ENCODE measurements at regions of chr2 and their contacts with region 1.

Region 1: GRCh38 chr2:238288650-238289573 is 502 bp upstream of the PER2 start:
- DNase-seq: peak; percentile 98
- H3K4me3 ChIP-seq: peak overlapping the region; percentile 39 to 80 (median 78)
- H3K27ac ChIP-seq: peak overlapping the region; percentile 99
- H3K4me1 ChIP-seq: peaks cover 55% of the 10 kb centered on the region
- H3K27me3 ChIP-seq: no peaks in the 10 kb centered on the region
- CTCF ChIP-seq: peak in 1 of 2 donors; percentile 15

Region 2: DNA sequence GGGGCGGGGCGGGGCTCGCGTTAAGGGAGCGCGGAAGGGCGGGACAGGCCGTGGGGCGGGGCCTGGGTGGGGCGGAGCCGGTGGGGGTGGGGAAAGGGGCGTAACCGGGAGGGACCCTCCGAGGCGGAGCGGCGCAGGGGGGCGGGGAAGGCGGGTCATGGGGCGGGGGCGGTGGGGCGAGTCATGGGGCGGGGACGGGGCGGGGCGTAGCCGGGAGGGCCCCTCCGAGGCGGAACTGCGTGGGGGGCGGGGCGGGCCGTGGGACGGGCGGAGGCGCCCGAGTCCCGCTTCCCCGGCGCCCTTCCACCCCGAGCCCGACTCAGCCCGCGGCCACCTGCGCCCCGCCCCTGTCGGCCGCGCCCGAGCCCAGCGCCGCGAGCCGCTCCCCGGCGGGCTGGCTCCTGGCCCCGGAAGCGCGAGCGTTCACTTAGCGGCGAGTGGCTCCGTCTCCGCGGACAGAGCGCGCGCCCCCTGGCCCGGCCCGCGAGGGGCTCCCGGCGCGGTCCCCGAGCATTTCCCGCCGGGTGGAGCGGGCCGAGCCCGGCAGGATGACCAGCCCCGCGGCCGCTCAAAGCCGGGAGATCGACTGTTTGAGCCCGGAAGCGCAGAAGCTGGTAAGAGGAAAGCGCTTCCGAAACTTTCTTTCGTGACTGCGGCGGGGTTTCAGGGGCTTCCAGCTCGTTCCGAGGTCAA is 596.9 kb before region 1 on chr2:
- CTCF ChIA-PET with region 1: no interaction called
- dilution Hi-C with region 1: no loop called
- in situ Hi-C with region 1: no loop called
- intact Hi-C with region 1: loop called (anchors 5 kb)
- DNase-seq: peak; percentile 84
- H3K4me3 ChIP-seq: peak overlapping the region; percentile 84 to 94 (median 93)
- H3K27ac ChIP-seq: peak overlapping the region; percentile 99
- H3K4me1 ChIP-seq: peaks cover 72% of the 10 kb centered on the region
- H3K27me3 ChIP-seq: no peaks in the 10 kb centered on the region
- CTCF ChIP-seq: no peak

Region 3: GRCh38 chr2:238203094-238203972 is 85.6 kb before region 1 on chr2 and contains the start of gene ILKAP:
- CTCF ChIA-PET with region 1: no interaction called
- dilution Hi-C with region 1: no loop called
- in situ Hi-C with region 1: no loop called
- intact Hi-C with region 1: no loop called
- DNase-seq: peak; percentile 80
- H3K4me3 ChIP-seq: peak within 1 kb of the TSS; percentile 70 to 98 (median 83)
- H3K27ac ChIP-seq: peak within 1 kb of the TSS; percentile 69
- H3K4me1 ChIP-seq: peaks cover 13% of the 10 kb centered on the region
- H3K27me3 ChIP-seq: no peaks in the 10 kb centered on the region
- CTCF ChIP-seq: no peak
- total RNA-seq, gene ILKAP: 16.7 to 52.7 TPM

Region 4: DNA sequence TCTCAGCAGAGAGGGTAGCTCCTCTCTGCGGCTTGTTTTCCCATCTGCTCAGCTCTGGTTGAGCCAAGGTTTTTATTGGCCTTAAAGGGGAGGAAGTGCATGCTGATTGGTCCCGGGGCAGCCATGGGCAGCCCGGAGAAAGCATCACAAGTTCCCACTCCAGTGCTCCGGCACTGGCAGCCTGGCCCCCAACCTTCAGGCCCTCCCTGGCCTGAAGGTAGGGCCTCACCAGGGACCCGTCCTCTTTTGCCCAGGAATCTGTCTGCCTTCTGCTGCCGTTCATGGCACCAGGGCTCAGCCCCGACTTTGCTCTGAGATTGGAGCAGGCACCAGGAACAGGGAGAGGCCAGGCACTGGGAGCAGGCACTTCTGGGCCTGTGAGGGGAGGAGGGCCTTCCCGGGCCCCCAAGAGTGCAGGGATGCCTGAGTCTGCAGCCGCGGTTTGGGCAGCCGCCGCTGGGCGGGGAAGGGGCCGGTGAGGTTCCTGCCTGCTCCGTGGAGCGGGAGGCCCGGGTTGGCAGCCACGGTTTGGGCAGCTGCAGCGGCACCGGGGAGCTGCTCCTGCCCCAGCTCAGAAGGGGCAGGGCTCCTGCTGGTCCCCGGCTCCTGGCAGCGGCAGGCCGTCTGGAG is 67.9 kb before region 1 on chr2:
- CTCF ChIA-PET with region 1: no interaction called
- dilution Hi-C with region 1: no loop called
- in situ Hi-C with region 1: no loop called
- intact Hi-C with region 1: no loop called
- DNase-seq: peak; percentile 32
- H3K4me3 ChIP-seq: no peak overlapping the region
- H3K27ac ChIP-seq: no peak overlapping the region
- H3K4me1 ChIP-seq: no peaks in the 10 kb centered on the region
- H3K27me3 ChIP-seq: no peaks in the 10 kb centered on the region
- CTCF ChIP-seq: no peak

Region 5: GRCh38 chr2:238263204-238264071 is 25.5 kb before region 1 on chr2:
- CTCF ChIA-PET with region 1: interaction called, 4 read pairs
- dilution Hi-C with region 1: no loop called
- in situ Hi-C with region 1: no loop called
- intact Hi-C with region 1: loop called (anchors 1 kb)
- DNase-seq: peak; percentile 67
- H3K4me3 ChIP-seq: no peak overlapping the region
- H3K27ac ChIP-seq: no peak overlapping the region
- H3K4me1 ChIP-seq: peaks cover 22% of the 10 kb centered on the region
- H3K27me3 ChIP-seq: no peaks in the 10 kb centered on the region
- CTCF ChIP-seq: peak; percentile 78 to 79

Region 6: GRCh38 chr2:238320246-238320647 is 31.3 kb after region 1 on chr2 and contains the start of gene TRAF3IP1:
- CTCF ChIA-PET with region 1: no interaction called
- dilution Hi-C with region 1: no loop called
- in situ Hi-C with region 1: no loop called
- intact Hi-C with region 1: loop called (anchors 1 kb)
- DNase-seq: peak; percentile 92
- H3K4me3 ChIP-seq: peak within 1 kb of the TSS; percentile 66 to 85 (median 73)
- H3K27ac ChIP-seq: peak within 1 kb of the TSS; percentile 78
- H3K4me1 ChIP-seq: peaks cover 17% of the 10 kb centered on the region
- H3K27me3 ChIP-seq: no peaks in the 10 kb centered on the region
- CTCF ChIP-seq: no peak
- total RNA-seq, gene TRAF3IP1: 7.0 to 18.1 TPM

Region 7: GRCh38 chr2:238438856-238439849 is 150.2 kb after region 1 on chr2:
- CTCF ChIA-PET with region 1: no interaction called
- dilution Hi-C with region 1: no loop called
- in situ Hi-C with region 1: loop called in 1 of 2 experiments (anchors 10 kb)
- intact Hi-C with region 1: loop called (anchors 5 kb)
- DNase-seq: peak; percentile 100
- H3K4me3 ChIP-seq: peak overlapping the region; percentile 6 to 29 (median 22)
- H3K27ac ChIP-seq: peak overlapping the region; percentile 97
- H3K4me1 ChIP-seq: peaks cover 29% of the 10 kb centered on the region
- H3K27me3 ChIP-seq: no peaks in the 10 kb centered on the region
- CTCF ChIP-seq: no peak